ENCODE measurements at regions of chr1 and their contacts with region 1.

Region 1: GRCh38 chr1:113389953-113390834 is at the start of gene MAGI3:
- DNase-seq: peak; percentile 83 to 97 (median 92)
- ATAC-seq: peak; percentile 87
- H3K4me3 ChIP-seq: peak within 1 kb of the TSS; percentile 91
- H3K4me3 Mint-ChIP-seq: peak within 1 kb of the TSS; percentile 92
- H3K27ac ChIP-seq: peak within 1 kb of the TSS; percentile 43 to 46
- H3K27ac Mint-ChIP-seq: peak within 1 kb of the TSS; percentile 67
- H3K4me1 ChIP-seq: peaks cover 25% of the 10 kb centered on the region
- H3K4me1 Mint-ChIP-seq: peaks cover 28% of the 10 kb centered on the region
- H3K27me3 ChIP-seq: no peaks in the 10 kb centered on the region
- H3K27me3 Mint-ChIP-seq: no peaks in the 10 kb centered on the region
- CTCF ChIP-seq: no peak
- total RNA-seq, gene MAGI3: 6.7 to 8.7 TPM

Region 2: GRCh38 chr1:112395821-112396652 is 994.2 kb before region 1 on chr1 and contains the start of gene CTTNBP2NL:
- CTCF ChIA-PET with region 1: no interaction called
- POLR2A ChIA-PET with region 1: no interaction called
- intact Hi-C with region 1: loop called in 1 of 2 experiments (anchors 5 kb)
- DNase-seq: peak; percentile 58 to 88 (median 70)
- ATAC-seq: peak; percentile 98
- H3K4me3 ChIP-seq: peak within 1 kb of the TSS; percentile 99
- H3K4me3 Mint-ChIP-seq: peak within 1 kb of the TSS; percentile 97
- H3K27ac ChIP-seq: no peak within 1 kb of the TSS
- H3K27ac Mint-ChIP-seq: peak within 1 kb of the TSS; percentile 27
- H3K4me1 ChIP-seq: peaks cover 20% of the 10 kb centered on the region
- H3K4me1 Mint-ChIP-seq: peaks cover 20% of the 10 kb centered on the region
- H3K27me3 ChIP-seq: peaks cover 6 to 10% of the 10 kb centered on the region in 2 experiments
- H3K27me3 Mint-ChIP-seq: peaks cover 13% of the 10 kb centered on the region
- CTCF ChIP-seq: no peak
- total RNA-seq, gene CTTNBP2NL: 0.14 to 0.25 TPM

Region 3: GRCh38 chr1:112955781-112956543 is 434.2 kb before region 1 on chr1 and contains the start of gene SLC16A1:
- CTCF ChIA-PET with region 1: no interaction called
- POLR2A ChIA-PET with region 1: no interaction called
- intact Hi-C with region 1: loop called in 1 of 2 experiments (anchors 5 kb)
- DNase-seq: peak; percentile 78 to 95 (median 86)
- ATAC-seq: peak; percentile 74
- H3K4me3 ChIP-seq: peak within 1 kb of the TSS; percentile 86
- H3K4me3 Mint-ChIP-seq: peak within 1 kb of the TSS; percentile 98
- H3K27ac ChIP-seq: peak within 1 kb of the TSS; percentile 80 to 84
- H3K27ac Mint-ChIP-seq: peak within 1 kb of the TSS; percentile 76
- H3K4me1 ChIP-seq: peaks cover 35% of the 10 kb centered on the region
- H3K4me1 Mint-ChIP-seq: peaks cover 61% of the 10 kb centered on the region
- H3K27me3 ChIP-seq: no peaks in the 10 kb centered on the region
- H3K27me3 Mint-ChIP-seq: no peaks in the 10 kb centered on the region
- CTCF ChIP-seq: peak; percentile 14
- total RNA-seq, gene SLC16A1: 22.9 to 26.6 TPM

Region 4: GRCh38 chr1:113415310-113416070 is 25.3 kb after region 1 on chr1:
- CTCF ChIA-PET with region 1: no interaction called
- POLR2A ChIA-PET with region 1: interaction called, 16 read pairs
- intact Hi-C with region 1: no loop called
- DNase-seq: peak in 1 of 14 experiments; percentile 27
- ATAC-seq: no peak
- H3K4me3 ChIP-seq: no peak overlapping the region
- H3K4me3 Mint-ChIP-seq: no peak overlapping the region
- H3K27ac ChIP-seq: no peak overlapping the region
- H3K27ac Mint-ChIP-seq: no peak overlapping the region
- H3K4me1 ChIP-seq: no peaks in the 10 kb centered on the region
- H3K4me1 Mint-ChIP-seq: peaks cover 5% of the 10 kb centered on the region
- H3K27me3 ChIP-seq: no peaks in the 10 kb centered on the region
- H3K27me3 Mint-ChIP-seq: no peaks in the 10 kb centered on the region
- CTCF ChIP-seq: no peak

Region 5: GRCh38 chr1:114581335-114582287 is 1191.4 kb after region 1 on chr1 and contains the start of gene BCAS2:
- CTCF ChIA-PET with region 1: no interaction called
- POLR2A ChIA-PET with region 1: no interaction called
- intact Hi-C with region 1: loop called in 1 of 2 experiments (anchors 10 kb)
- DNase-seq: peak; percentile 88 to 99 (median 92)
- ATAC-seq: peak; percentile 92
- H3K4me3 ChIP-seq: peak within 1 kb of the TSS; percentile 86
- H3K4me3 Mint-ChIP-seq: peak within 1 kb of the TSS; percentile 95
- H3K27ac ChIP-seq: peak within 1 kb of the TSS; percentile 82 to 97
- H3K27ac Mint-ChIP-seq: peak within 1 kb of the TSS; percentile 97
- H3K4me1 ChIP-seq: peaks cover 26% of the 10 kb centered on the region
- H3K4me1 Mint-ChIP-seq: peaks cover 48% of the 10 kb centered on the region
- H3K27me3 ChIP-seq: no peaks in the 10 kb centered on the region
- H3K27me3 Mint-ChIP-seq: no peaks in the 10 kb centered on the region
- CTCF ChIP-seq: no peak
- total RNA-seq, gene BCAS2: 109 to 111 TPM